Posterior vena cava (tissue), 2 donors: ENCODE measurements at regions of chr7 and their contacts with region 1.

Region 1: GRCh38 chr7:44128721-44129582 is 5.6 kb upstream of the POLD2 start:
- DNase-seq: no peak

Region 2: GRCh38 chr7:44065436-44066118 is 63.4 kb before region 1 on chr7 and contains the start of gene PGAM2:
- intact Hi-C with region 1: loop called in 1 of 2 experiments (anchors 5 kb)
- DNase-seq: peak; percentile 81
- total RNA-seq, gene PGAM2: 1.6 to 2.1 TPM

Region 3: GRCh38 chr7:44218418-44219201 is 89.7 kb after region 1 on chr7:
- intact Hi-C with region 1: no loop called
- DNase-seq: peak; percentile 70